Spleen (tissue), 13 donors: ENCODE measurements at regions of chr1 and their contacts with region 1.

Region 1: GRCh38 chr1:99170516-99170915 is 93.8 kb upstream of the PLPPR4 start:
- DNase-seq: no peak
- H3K4me3 ChIP-seq: no peak overlapping the region
- H3K27ac ChIP-seq: no peak overlapping the region
- H3K4me1 ChIP-seq: no peaks in the 10 kb centered on the region
- H3K27me3 ChIP-seq: peaks cover 0 to 6% (median 0%) of the 10 kb centered on the region in 7 donors
- CTCF ChIP-seq: no peak
- POLR2A ChIP-seq: no peak

Region 2: DNA sequence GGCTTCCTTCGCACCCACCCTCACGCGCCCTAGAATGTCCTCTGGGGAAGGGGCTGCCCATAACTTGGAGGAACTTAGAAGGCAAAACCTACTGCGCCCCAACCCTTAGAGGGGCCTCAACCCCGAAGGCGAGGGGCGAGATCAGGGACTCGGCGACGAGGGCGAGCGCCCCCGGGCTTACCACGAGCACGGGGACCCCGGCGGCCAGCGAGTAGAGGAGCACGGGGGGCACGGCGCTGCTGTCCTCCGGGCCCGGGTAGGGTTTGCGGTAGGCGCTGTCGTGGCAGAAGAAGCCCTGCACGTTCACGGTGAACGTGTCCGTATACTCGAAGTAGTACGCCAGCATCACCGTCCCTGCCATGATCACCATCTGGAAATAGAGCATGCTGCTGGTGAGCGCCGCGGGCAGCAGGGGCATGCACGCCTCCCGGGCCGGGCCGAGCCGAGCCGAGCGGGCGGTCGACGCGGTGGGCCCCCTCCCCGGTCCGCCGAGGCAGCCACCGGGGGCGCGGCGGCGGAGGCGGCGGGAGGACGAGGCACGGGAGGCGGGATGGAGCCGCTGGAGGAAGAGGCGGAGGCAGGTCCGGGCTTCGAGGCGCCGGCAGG is 166.2 kb before region 1 on chr1:
- intact Hi-C with region 1: no loop called
- DNase-seq: peak; percentile 70
- H3K4me3 ChIP-seq: peak overlapping the region in 7 of 8 donors; percentile 6 to 67 (median 37)
- H3K27ac ChIP-seq: no peak overlapping the region
- H3K4me1 ChIP-seq: peaks cover 0 to 20% (median 14%) of the 10 kb centered on the region in 6 donors
- H3K27me3 ChIP-seq: peaks cover 0 to 89% (median 37%) of the 10 kb centered on the region in 7 donors
- CTCF ChIP-seq: no peak
- POLR2A ChIP-seq: no peak

Region 3: GRCh38 chr1:99282536-99282935 is 112.0 kb after region 1 on chr1:
- intact Hi-C with region 1: no loop called
- DNase-seq: no peak
- H3K4me3 ChIP-seq: no peak overlapping the region
- H3K27ac ChIP-seq: no peak overlapping the region
- H3K4me1 ChIP-seq: no peaks in the 10 kb centered on the region
- H3K27me3 ChIP-seq: no peaks in the 10 kb centered on the region
- CTCF ChIP-seq: no peak
- POLR2A ChIP-seq: no peak

Region 4: GRCh38 chr1:99315305-99315704 is 144.8 kb after region 1 on chr1:
- intact Hi-C with region 1: no loop called
- DNase-seq: no peak
- H3K4me3 ChIP-seq: no peak overlapping the region
- H3K27ac ChIP-seq: no peak overlapping the region
- H3K4me1 ChIP-seq: no peaks in the 10 kb centered on the region
- H3K27me3 ChIP-seq: no peaks in the 10 kb centered on the region
- CTCF ChIP-seq: no peak
- POLR2A ChIP-seq: no peak

Region 5: DNA sequence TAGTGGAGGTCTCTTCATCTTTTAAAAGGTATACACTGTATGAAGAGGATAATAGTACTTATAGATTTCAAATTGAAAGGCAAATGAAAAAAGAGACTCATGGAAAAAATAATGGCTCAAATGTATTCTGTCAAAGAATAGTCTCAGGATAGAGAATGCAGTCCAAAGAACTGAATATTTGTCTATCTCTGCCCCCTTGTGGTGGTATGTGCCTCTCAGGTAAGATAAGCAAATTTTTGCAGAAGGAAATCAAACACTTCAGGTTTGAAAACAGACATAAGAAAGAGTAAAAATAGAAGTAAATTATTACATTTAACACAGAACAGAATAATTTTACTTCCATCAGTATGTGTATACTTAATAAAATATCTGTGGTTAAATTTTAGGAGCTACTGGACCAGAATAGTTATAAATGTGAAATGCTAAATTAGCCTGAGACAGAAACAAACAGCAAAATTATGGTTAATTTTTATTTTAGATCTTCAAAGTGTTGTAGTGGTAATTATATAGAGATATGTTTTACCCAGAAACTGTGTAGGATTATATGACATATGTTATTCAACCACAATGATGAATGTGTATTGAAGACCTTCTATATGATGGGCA is 311.0 kb after region 1 on chr1:
- intact Hi-C with region 1: loop called (anchors 10 kb)
- DNase-seq: no peak
- H3K4me3 ChIP-seq: no peak overlapping the region
- H3K27ac ChIP-seq: no peak overlapping the region
- H3K4me1 ChIP-seq: no peaks in the 10 kb centered on the region
- H3K27me3 ChIP-seq: no peaks in the 10 kb centered on the region
- CTCF ChIP-seq: peak; percentile 13 to 69 (median 55)
- POLR2A ChIP-seq: no peak

Region 6: GRCh38 chr1:99533909-99534637 is 363.6 kb after region 1 on chr1:
- intact Hi-C with region 1: no loop called
- DNase-seq: no peak
- H3K4me3 ChIP-seq: no peak overlapping the region
- H3K27ac ChIP-seq: no peak overlapping the region
- H3K4me1 ChIP-seq: no peaks in the 10 kb centered on the region
- H3K27me3 ChIP-seq: no peaks in the 10 kb centered on the region
- CTCF ChIP-seq: no peak
- POLR2A ChIP-seq: no peak